PC-3 (cell line): ENCODE measurements at regions of chr20 and their contacts with region 1.

Region 1: DNA sequence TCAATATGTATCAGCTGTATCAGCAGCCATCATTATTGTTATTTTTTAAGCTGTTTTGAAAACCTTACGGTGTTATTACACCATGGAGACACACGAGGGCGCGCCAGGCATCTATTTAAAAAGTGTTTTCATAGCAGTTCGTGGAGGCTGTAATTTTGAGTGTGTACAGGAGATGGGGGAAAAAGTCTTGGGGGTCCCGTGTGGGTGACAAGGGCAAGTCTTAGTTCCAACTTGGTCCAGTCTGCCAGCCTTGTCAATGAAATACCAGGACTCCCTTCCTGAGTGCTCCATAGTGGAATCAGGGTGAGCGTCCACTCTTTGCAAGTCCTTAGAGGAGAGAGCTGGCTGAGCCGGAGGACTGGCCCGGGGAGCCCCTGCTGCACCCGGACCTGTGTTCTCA is 43.3 kb downstream of the SLC2A10 start:
- DNase-seq: peak; percentile 82
- ATAC-seq: peak; percentile 44
- H3K4me3 ChIP-seq: peak overlapping the region; percentile 62; the same call in 1 of the 2 replicates
- H3K27ac ChIP-seq: no peak overlapping the region
- H3K4me1 ChIP-seq: peaks cover 6% of the 10 kb centered on the region
- H3K27me3 ChIP-seq: no peaks in the 10 kb centered on the region
- CTCF ChIP-seq: peak; percentile 93

Region 2: DNA sequence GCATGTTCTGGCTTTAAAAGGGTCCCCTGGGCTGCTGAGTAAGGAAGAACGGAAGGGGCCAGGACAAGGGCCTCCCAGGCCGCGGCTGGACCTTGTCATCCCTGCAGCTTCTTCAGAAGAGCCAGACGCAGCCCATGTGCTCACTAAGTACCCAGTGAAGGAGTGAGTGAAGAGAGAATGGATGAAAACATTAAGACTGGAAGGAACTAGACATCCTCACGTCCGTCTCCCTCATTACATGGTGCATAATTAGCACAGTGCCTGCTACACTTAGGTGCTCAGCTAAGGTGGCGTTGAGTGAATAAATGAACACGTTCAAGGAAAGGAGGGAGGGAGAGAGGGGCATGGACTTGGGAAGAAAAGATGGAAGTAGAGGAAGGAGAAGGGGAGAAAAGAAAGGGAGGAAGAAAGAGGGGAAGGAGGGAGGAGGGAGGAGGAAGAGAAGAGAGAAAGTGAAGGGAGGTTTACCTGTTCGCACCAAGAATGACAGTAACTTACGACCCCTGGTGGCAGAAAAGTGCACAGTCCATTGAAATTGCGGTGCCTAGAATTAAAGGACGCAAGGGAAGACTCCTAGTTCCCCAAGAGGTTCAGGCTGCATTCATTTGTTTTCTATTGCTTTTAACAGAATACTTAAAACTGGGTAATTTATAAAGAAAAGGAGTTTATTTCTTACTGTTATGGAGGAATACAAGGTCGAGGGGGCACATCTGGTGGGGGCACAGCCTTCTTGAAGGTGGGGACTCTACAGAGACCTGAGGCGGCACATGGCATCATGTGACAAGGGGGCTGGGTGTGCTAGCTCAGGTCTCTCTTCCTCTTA is 71.5 kb before region 1 on chr20:
- CTCF ChIA-PET with region 1: no interaction called
- POLR2A ChIA-PET with region 1: no interaction called
- intact Hi-C with region 1: no loop called
- DNase-seq: peak; percentile 87
- ATAC-seq: peak; percentile 69
- H3K4me3 ChIP-seq: no peak overlapping the region
- H3K27ac ChIP-seq: no peak overlapping the region
- H3K4me1 ChIP-seq: no peaks in the 10 kb centered on the region
- H3K27me3 ChIP-seq: no peaks in the 10 kb centered on the region
- CTCF ChIP-seq: peak; percentile 92

Region 3: GRCh38 chr20:46712056-46712636 is 40.6 kb before region 1 on chr20:
- CTCF ChIA-PET with region 1: interaction called, 11 read pairs
- POLR2A ChIA-PET with region 1: no interaction called
- intact Hi-C with region 1: no loop called
- DNase-seq: no peak
- ATAC-seq: no peak
- H3K4me3 ChIP-seq: no peak overlapping the region
- H3K27ac ChIP-seq: no peak overlapping the region
- H3K4me1 ChIP-seq: peaks cover 32% of the 10 kb centered on the region
- H3K27me3 ChIP-seq: no peaks in the 10 kb centered on the region
- CTCF ChIP-seq: no peak